Activated naive CD4-positive, alpha-beta T cell treated with anti-CD3 and anti-CD28 coated beads for 36 hours (primary cell): ENCODE measurements at regions of chr10 and their contacts with region 1.

Region 1: GRCh38 chr10:119596537-119597404 is at the start of gene TIAL1:
- DNase-seq: peak; percentile 98
- H3K4me3 Mint-ChIP-seq: peak within 1 kb of the TSS; percentile 93
- H3K27ac Mint-ChIP-seq: peak within 1 kb of the TSS; percentile 98
- H3K4me1 Mint-ChIP-seq: peaks cover 47% of the 10 kb centered on the region
- H3K27me3 Mint-ChIP-seq: no peaks in the 10 kb centered on the region
- total RNA-seq, gene TIAL1: 184 to 192 TPM

Region 2: GRCh38 chr10:119080521-119081260 is 516.1 kb before region 1 on chr10 and contains the start of gene EIF3A:
- CTCF ChIA-PET with region 1: no interaction called
- intact Hi-C with region 1: loop called (anchors 1 kb)
- DNase-seq: peak; percentile 90
- H3K4me3 Mint-ChIP-seq: peak within 1 kb of the TSS; percentile 95
- H3K27ac Mint-ChIP-seq: peak within 1 kb of the TSS; percentile 98
- H3K4me1 Mint-ChIP-seq: peaks cover 33% of the 10 kb centered on the region
- H3K27me3 Mint-ChIP-seq: no peaks in the 10 kb centered on the region
- total RNA-seq, gene EIF3A: 113 to 120 TPM

Region 3: GRCh38 chr10:119502209-119502608 is 94.6 kb before region 1 on chr10:
- CTCF ChIA-PET with region 1: no interaction called
- intact Hi-C with region 1: loop called (anchors 1 kb)
- DNase-seq: peak; percentile 93
- H3K4me3 Mint-ChIP-seq: peak overlapping the region; percentile 47
- H3K27ac Mint-ChIP-seq: peak overlapping the region; percentile 99
- H3K4me1 Mint-ChIP-seq: peaks cover 98% of the 10 kb centered on the region
- H3K27me3 Mint-ChIP-seq: no peaks in the 10 kb centered on the region

Region 4: DNA sequence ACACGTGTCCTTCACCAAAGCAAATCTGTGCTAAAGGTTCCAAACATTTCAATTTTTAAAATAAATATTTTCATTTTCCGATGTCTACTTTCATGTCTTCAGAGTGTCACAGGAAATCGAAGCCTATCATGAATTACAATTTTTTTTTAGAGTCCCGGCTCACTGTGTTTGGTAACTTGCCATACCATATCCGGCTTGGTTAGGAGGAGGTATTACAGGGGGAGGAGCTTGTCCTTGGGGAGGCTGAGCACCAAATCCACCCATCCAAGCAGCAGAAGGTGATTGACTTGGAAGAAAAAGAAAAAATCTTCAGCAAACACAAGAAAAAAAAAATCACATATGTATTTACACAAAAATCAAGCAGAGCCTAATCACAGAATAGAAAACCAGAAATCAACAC is 21.3 kb before region 1 on chr10:
- CTCF ChIA-PET with region 1: interaction called, 3 read pairs
- intact Hi-C with region 1: loop called (anchors 2 kb)
- DNase-seq: peak; percentile 42
- H3K4me3 Mint-ChIP-seq: no peak overlapping the region
- H3K27ac Mint-ChIP-seq: peak overlapping the region; percentile 86
- H3K4me1 Mint-ChIP-seq: peaks cover 23% of the 10 kb centered on the region
- H3K27me3 Mint-ChIP-seq: no peaks in the 10 kb centered on the region

Region 5: DNA sequence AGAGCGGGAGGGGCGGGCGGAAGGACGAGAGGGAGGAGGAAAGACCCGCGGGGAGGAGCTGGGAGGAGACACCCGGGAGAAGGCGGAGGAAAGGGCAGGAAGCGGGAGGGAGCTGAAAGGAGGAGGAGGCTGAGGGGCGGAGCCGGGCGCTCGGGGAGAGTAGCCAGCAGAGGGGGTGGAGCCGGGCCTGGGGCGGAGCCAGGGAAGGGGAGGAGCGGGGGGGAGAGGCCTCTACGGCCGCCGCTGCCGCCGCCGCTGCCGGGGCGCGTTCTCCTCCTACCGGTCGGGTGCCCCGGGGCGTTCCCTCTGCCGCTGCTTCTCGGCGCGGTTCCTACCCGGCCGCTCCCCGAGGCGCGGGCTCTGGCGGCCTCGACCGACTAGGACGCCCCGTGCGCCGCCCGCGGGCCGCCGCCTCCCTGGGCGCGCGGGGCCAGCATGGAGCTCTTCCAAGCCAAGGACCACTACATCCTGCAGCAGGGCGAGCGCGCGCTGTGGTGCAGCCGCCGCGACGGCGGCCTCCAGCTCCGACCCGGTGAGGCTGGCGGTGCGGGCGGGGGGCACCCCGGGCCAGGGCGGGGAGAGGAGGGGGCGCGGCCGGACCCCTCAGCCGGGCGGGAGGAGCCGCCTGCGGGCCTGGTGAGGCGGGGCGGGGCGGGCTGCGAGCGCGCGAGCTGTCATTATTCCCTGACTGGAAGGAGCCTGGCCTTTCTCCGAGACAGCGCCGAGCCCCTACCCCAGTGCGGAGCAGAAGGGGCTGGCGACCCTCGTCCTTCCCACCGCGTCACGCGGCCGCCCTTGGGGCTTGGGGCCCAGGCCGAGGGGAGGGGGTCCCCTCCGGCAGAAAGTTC is 129.3 kb after region 1 on chr10 and contains the start of gene INPP5F:
- CTCF ChIA-PET with region 1: no interaction called
- intact Hi-C with region 1: loop called (anchors 2 kb)
- DNase-seq: peak; percentile 100
- H3K4me3 Mint-ChIP-seq: peak within 1 kb of the TSS; percentile 88
- H3K27ac Mint-ChIP-seq: peak within 1 kb of the TSS; percentile 78
- H3K4me1 Mint-ChIP-seq: peaks cover 41% of the 10 kb centered on the region
- H3K27me3 Mint-ChIP-seq: no peaks in the 10 kb centered on the region
- total RNA-seq, gene INPP5F: 10.5 to 10.9 TPM

Region 6: DNA sequence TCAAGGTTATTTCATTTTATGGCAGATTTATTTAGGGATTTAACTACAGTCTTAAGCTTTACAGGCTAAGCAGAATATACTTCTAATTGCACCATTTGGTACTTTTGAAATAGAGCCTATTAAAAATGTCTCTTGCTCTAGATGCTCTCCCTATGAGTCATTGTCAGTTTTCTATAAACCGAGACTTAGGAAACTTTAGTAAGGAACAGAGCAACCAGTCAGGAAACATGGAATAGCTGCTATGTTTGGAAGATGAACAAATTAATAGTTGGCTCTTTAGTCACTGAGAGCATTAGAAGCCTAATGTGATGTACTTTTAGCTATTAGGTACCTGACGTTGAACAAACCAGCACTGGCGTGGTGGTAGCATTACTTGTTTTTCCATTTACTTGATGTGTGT is 164.3 kb after region 1 on chr10:
- CTCF ChIA-PET with region 1: no interaction called
- intact Hi-C with region 1: no loop called
- DNase-seq: no peak
- H3K4me3 Mint-ChIP-seq: no peak overlapping the region
- H3K27ac Mint-ChIP-seq: no peak overlapping the region
- H3K4me1 Mint-ChIP-seq: peaks cover 3% of the 10 kb centered on the region
- H3K27me3 Mint-ChIP-seq: no peaks in the 10 kb centered on the region

Region 7: DNA sequence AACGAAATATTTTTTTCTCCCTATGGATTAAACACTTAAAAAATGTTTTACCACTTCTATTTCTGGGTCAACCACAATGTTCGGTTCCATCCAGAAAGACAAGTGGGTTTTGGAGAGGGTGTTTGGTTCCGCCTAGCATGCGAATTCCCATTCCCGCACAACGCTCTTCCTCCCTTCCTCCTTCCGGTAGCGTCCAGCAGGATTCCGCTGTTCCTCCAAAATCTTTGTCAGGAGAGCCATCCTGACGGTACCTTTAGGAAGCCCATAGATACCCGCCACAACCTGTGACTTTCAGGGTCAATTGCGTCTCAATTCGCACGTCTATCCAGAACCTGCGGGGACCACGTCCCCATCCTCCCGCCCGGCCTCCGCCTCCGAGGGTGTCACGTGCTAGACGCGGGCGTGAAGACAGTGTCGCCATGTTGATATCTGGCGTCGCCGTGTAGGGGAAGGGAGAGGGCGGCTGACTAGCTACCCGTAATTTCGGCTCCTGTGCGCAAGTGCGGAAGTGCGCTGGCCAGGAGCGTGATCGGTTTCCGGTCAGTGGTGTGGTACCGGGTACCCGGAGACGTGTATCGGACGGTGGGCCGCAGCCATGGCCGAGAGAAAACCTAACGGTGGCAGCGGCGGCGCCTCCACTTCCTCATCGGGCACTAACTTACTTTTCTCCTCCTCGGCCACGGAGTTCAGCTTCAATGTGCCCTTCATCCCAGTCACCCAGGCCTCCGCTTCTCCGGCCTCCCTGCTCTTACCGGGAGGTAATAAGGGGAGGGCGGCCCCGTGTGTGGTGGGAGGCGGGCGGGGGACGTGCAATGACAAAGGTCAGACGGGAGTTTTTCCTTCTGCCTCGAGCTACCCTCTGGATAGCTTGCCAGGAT is 295.7 kb after region 1 on chr10 and contains the start of gene SEC23IP:
- CTCF ChIA-PET with region 1: interaction called, 5 read pairs
- intact Hi-C with region 1: loop called (anchors 2 kb)
- DNase-seq: peak; percentile 95
- H3K4me3 Mint-ChIP-seq: peak within 1 kb of the TSS; percentile 95
- H3K27ac Mint-ChIP-seq: peak within 1 kb of the TSS; percentile 92
- H3K4me1 Mint-ChIP-seq: peaks cover 49% of the 10 kb centered on the region
- H3K27me3 Mint-ChIP-seq: no peaks in the 10 kb centered on the region
- total RNA-seq, gene SEC23IP: 49.0 to 55.2 TPM